Vagina (tissue), 2 donors: ENCODE measurements at regions of chr11 and their contacts with region 1.

Region 1: DNA sequence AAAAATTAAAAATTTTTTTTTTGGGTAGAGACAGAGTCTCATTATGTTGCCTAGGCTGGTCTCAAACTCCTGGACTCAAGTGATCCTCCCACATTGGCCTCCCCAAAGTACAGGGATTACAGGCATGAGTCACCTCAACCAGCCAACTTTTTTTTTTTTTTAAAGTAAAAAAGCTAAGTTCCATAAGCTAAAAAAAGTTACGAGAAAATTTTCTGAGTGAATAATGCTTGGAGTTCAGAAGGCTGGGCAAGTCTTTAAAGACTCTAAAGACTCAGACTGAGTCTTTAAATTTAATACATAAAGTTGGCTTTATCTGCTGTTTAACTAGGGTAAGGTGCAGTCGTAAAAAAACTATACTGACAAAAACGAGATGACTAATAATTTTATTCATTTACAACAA is 5.6 kb downstream of the DDX6 start:
- DNase-seq: no peak
- H3K4me3 ChIP-seq: no peak overlapping the region
- H3K27ac ChIP-seq: no peak overlapping the region
- H3K4me1 ChIP-seq: peaks cover 89% of the 10 kb centered on the region
- H3K27me3 ChIP-seq: no peaks in the 10 kb centered on the region
- CTCF ChIP-seq: no peak
- POLR2A ChIP-seq: no peak

Region 2: DNA sequence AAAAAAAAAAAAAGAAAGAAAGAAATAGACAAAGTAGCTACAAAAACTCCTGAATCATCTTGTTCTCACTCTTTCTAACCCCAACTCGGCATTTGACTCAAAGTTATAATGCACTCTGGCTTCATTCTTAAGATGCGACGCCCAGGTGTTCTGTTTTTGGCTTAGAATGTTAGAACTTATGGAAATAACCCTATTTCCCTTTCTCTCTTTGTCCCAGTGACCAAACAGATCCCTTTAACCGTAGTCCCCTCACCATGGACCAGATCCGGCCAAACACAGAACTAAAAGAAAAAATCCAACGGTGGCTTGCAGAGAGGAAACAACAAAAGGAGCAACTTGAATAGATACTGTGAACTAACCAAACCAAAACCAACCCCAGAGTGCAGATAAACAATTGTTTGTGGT is 389.3 kb before region 1 on chr11:
- intact Hi-C with region 1: no loop called
- DNase-seq: no peak
- H3K4me3 ChIP-seq: no peak overlapping the region
- H3K27ac ChIP-seq: no peak overlapping the region
- H3K4me1 ChIP-seq: peaks cover 7% of the 10 kb centered on the region
- H3K27me3 ChIP-seq: no peaks in the 10 kb centered on the region
- CTCF ChIP-seq: no peak
- POLR2A ChIP-seq: no peak

Region 3: DNA sequence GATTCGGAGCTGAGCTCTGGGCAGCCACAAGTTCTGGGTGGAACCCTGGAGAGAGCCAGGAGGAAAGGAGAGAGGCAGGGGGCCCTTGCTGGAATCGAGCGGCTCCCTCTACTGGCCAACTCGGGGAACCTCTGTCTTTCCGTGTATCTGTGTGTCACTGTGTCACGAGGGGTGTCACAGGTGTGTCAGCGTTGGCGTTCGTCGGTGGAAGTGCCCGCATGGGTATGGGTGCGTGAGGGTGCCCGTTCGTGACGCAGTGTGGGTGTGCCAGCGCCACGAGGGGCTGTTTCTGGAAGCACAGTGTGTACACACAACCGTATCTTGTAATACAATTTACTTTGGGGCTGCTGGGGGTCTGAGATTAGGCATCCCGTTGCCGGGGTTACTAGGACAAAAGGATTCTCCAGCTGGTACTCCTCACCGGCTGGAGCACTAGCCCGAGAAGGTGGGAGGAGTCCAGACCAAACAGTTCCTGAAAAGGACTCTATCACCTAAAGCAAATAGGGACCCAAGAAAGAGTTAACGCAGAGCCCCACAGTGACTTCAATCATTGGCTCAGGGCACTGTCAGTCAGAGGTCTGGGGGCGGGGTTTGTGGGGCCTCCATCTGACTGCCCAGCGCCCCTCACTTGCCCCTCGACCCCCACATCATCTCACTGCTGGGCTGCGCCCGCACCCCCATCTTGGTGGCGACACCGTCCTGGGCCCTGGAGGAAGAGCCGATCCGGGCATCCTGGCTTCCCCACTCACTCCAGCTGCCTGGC is 142.9 kb after region 1 on chr11:
- intact Hi-C with region 1: loop called (anchors 2 kb)
- DNase-seq: peak in 1 of 2 donors; percentile 99
- H3K4me3 ChIP-seq: peak overlapping the region; percentile 64 to 89
- H3K27ac ChIP-seq: peak overlapping the region; percentile 96
- H3K4me1 ChIP-seq: peaks cover 37% of the 10 kb centered on the region
- H3K27me3 ChIP-seq: no peaks in the 10 kb centered on the region
- CTCF ChIP-seq: peak; percentile 77 to 94 (median 93)
- POLR2A ChIP-seq: no peak